Left lung (tissue), 14 donors: ENCODE measurements at regions of chr5 and their contacts with region 1.

Region 1: GRCh38 chr5:171336521-171337209 is 27.6 kb downstream of the TLX3 start:
- DNase-seq: peak in 2 of 4 donors; percentile 47 to 70
- ATAC-seq: peak; percentile 91
- H3K4me3 ChIP-seq: peak overlapping the region; percentile 10 to 20
- H3K27ac ChIP-seq: no peak overlapping the region
- H3K4me1 ChIP-seq: peaks cover 0 to 7% of the 10 kb centered on the region in 2 donors
- H3K27me3 ChIP-seq: peaks cover 17 to 96% of the 10 kb centered on the region in 2 donors
- CTCF ChIP-seq: peak; percentile 18 to 54

Region 2: GRCh38 chr5:171207256-171207847 is 129.3 kb before region 1 on chr5:
- intact Hi-C with region 1: loop called in 1 of 2 experiments (anchors 10 kb)
- DNase-seq: peak in 2 of 4 donors; percentile 30 to 44
- ATAC-seq: peak; percentile 27
- H3K4me3 ChIP-seq: no peak overlapping the region
- H3K27ac ChIP-seq: no peak overlapping the region
- H3K4me1 ChIP-seq: no peaks in the 10 kb centered on the region
- H3K27me3 ChIP-seq: no peaks in the 10 kb centered on the region
- CTCF ChIP-seq: peak; percentile 29 to 56

Region 3: DNA sequence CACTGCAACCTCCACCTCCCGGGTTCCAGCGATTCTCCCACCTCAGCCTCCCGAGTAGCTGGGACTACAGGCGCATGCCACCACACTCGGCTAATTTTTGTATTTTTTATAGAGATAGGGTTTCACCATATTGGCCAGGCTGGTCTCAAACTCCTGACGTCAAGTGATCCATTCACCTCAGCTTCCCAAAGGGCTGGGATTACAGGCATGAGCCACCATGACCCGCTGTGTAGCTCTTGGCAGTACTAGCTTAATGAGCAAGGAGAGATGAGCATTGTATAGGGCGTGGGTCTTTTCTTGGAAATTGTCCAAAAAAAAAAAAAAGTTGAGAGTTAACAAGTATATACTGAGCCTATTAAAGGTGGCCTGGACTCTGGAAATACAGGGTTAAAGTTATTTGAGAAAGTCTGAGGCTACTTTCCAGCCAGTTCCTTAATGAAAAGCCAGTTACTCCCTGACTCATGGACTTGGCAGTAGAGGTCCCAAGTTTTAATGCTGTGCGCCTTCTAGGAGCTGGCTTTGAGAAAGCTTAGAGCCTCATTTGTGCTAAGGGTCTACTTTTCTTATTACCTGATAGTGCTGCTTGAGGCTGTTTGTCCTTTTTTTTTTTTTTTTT is 78.6 kb after region 1 on chr5:
- intact Hi-C with region 1: no loop called
- DNase-seq: no peak
- ATAC-seq: no peak
- H3K4me3 ChIP-seq: no peak overlapping the region
- H3K27ac ChIP-seq: no peak overlapping the region
- H3K4me1 ChIP-seq: peaks cover 7 to 18% of the 10 kb centered on the region in 2 donors
- H3K27me3 ChIP-seq: peaks cover 0 to 21% of the 10 kb centered on the region in 2 donors
- CTCF ChIP-seq: no peak

Region 4: DNA sequence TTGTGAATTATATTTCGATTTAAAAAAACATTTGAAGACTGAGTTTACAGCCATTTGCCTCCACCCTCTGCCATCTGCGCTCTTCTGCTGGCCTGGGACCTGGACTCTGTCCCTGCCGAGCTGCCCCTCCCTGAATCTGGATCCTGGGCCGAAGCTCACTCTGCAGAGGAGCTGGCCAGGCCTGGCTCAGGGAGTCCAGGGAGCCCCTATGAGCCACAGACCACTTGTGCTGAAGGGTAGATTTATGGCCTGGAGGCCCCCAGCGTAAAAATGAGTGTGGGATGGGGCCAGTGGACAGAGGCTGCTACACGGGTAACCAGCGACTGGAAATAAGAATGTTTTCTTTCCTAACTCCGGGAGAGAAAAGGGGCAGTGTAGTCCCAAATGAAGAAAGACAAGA is 212.6 kb after region 1 on chr5:
- intact Hi-C with region 1: no loop called
- DNase-seq: no peak
- ATAC-seq: no peak
- H3K4me3 ChIP-seq: no peak overlapping the region
- H3K27ac ChIP-seq: no peak overlapping the region
- H3K4me1 ChIP-seq: no peaks in the 10 kb centered on the region
- H3K27me3 ChIP-seq: no peaks in the 10 kb centered on the region
- CTCF ChIP-seq: no peak